ENCODE measurements at regions of chr14 and their contacts with region 1.

Region 1: DNA sequence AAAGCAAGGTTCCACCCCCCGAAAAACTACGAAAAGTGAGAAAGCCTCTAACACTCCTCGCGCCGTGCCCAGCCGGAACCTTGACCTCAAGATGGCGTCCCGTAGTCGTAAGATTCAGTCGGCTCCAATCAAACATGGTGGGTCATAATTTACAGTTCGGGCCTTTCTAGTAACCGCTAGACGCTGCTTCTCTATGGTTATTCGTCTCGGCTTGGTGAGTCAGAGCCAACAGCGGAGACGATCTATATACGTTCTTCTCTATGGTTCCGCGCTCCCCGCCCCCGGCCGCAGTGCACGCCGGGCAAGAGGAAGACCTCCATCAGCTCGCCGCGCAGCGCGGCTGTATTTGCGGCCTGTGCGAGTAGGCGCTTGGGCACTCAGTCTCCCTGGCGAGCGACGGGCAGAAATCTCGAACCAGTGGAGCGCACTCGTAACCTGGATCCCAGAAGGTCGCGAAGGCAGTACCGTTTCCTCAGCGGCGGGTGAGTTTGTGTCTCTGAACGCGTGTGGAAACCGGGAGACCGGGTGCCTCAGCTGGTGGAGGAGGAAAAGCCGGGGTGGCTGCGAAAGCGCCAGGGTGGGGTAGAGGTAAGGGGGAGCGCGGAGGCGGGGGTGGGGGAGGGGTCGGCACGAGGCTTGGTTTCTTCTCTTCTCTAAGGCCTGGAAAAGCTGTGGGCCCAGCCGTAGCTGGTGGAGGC is at the start of gene RBM25:
- DNase-seq: peak; percentile 90
- ATAC-seq: peak; percentile 93
- H3K4me3 Mint-ChIP-seq: no peak within 1 kb of the TSS
- H3K27ac Mint-ChIP-seq: no peak within 1 kb of the TSS
- H3K4me1 Mint-ChIP-seq: peaks cover 42% of the 10 kb centered on the region
- H3K27me3 Mint-ChIP-seq: no peaks in the 10 kb centered on the region
- CTCF ChIP-seq: no peak
- total RNA-seq, gene RBM25: 114 and 123 TPM in 2 replicates

Region 2: DNA sequence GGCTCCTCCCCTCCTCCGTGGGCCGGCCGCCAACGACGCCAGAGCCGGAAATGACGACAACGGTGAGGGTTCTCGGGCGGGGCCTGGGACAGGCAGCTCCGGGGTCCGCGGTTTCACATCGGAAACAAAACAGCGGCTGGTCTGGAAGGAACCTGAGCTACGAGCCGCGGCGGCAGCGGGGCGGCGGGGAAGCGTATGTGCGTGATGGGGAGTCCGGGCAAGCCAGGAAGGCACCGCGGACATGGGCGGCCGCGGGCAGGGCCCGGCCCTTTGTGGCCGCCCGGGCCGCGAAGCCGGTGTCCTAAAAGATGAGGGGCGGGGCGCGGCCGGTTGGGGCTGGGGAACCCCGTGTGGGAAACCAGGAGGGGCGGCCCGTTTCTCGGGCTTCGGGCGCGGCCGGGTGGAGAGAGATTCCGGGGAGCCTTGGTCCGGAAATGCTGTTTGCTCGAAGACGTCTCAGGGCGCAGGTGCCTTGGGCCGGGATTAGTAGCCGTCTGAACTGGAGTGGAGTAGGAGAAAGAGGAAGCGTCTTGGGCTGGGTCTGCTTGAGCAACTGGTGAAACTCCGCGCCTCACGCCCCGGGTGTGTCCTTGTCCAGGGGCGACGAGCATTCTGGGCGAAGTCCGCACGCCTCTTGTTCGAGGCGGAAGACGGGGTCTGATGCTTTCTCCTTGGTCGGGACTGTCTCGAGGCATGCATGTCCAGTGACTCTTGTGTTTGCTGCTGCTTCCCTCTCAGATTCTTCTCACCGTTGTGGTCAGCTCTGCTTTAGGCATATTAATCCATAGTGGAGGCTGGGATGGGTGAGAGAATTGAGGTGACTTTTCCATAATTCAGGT is 78.2 kb after region 1 on chr14 and contains the start of gene PSEN1:
- CTCF ChIA-PET with region 1: no interaction called
- POLR2A ChIA-PET with region 1: interaction called, 47 read pairs
- intact Hi-C with region 1: loop called (anchors 1 kb)
- DNase-seq: peak; percentile 99
- ATAC-seq: peak; percentile 92
- H3K4me3 Mint-ChIP-seq: peak within 1 kb of the TSS; percentile 95
- H3K27ac Mint-ChIP-seq: peak within 1 kb of the TSS; percentile 98
- H3K4me1 Mint-ChIP-seq: peaks cover 33% of the 10 kb centered on the region
- H3K27me3 Mint-ChIP-seq: no peaks in the 10 kb centered on the region
- CTCF ChIP-seq: no peak
- total RNA-seq, gene PSEN1: 38.6 and 42.9 TPM in 2 replicates

Measured in activated B cell treated with CpG ODN at 0.5 μM for 24 hours (primary cell).